Common myeloid progenitor, CD34-positive (primary cell): ENCODE measurements at regions of chr5 and their contacts with region 1.

Region 1: GRCh38 chr5:150409638-150410523 is 2.8 kb downstream of the CD74 start:
- DNase-seq: peak; percentile 74 to 78 (median 74)
- H3K4me3 ChIP-seq: peak overlapping the region; percentile 30 to 100 (median 94)
- H3K27ac ChIP-seq: peak overlapping the region; percentile 97
- H3K4me1 ChIP-seq: peaks cover 12 to 61% (median 37%) of the 10 kb centered on the region in 4 experiments
- H3K27me3 ChIP-seq: no peaks in the 10 kb centered on the region

Region 2: DNA sequence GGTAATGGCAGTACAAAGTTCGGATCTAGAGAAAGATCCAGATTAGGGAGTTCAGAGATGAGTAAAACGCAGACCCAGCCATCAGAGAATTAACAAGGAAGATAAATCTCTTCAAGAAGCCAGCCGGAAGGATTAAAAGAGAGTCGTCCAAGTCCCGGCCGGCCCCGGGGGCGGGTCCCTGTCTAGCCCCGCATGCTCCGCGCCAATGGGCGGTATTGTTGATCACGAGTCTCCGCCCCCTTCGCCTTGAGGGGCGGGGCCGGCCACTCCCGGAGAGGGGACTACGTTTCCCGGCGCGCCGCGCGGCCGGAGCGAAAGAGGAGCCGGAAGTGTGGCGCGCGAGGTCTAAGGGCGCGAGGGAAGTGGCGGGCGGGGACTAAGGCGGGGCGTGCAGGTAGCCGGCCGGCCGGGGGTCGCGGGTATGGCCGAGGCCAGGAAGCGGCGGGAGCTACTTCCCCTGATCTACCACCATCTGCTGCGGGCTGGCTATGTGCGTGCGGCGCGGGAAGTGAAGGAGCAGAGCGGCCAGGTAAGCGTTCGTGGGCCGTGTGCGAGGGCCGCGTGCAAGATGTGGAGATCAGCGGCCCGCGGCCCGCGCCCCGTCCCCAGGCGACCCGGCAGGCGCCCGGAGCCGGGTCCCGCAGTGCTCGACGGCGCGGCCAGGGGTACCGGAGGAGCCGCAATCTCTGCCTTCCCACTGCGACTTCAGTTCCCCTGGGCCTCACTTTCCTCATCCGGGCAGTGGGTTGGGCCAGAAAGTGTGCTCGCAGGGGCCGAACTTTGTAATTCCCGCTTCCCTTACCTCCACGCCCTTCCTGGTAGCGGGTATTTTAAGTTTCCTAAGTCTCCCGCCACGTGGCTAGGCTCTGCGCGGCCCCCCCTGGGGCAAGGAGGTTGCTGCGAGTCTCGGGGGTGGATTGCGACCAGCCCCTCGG is 52.3 kb before region 1 on chr5 and contains the start of gene TCOF1:
- CTCF ChIA-PET with region 1: no interaction called
- POLR2A ChIA-PET with region 1: no interaction called
- DNase-seq: peak; percentile 93 to 97 (median 96)
- H3K4me3 ChIP-seq: peak within 1 kb of the TSS; percentile 59 to 88 (median 82)
- H3K27ac ChIP-seq: peak within 1 kb of the TSS in 1 of 2 experiments; percentile 74
- H3K4me1 ChIP-seq: peaks cover 2 to 20% (median 15%) of the 10 kb centered on the region in 4 experiments
- H3K27me3 ChIP-seq: no peaks in the 10 kb centered on the region

Region 3: DNA sequence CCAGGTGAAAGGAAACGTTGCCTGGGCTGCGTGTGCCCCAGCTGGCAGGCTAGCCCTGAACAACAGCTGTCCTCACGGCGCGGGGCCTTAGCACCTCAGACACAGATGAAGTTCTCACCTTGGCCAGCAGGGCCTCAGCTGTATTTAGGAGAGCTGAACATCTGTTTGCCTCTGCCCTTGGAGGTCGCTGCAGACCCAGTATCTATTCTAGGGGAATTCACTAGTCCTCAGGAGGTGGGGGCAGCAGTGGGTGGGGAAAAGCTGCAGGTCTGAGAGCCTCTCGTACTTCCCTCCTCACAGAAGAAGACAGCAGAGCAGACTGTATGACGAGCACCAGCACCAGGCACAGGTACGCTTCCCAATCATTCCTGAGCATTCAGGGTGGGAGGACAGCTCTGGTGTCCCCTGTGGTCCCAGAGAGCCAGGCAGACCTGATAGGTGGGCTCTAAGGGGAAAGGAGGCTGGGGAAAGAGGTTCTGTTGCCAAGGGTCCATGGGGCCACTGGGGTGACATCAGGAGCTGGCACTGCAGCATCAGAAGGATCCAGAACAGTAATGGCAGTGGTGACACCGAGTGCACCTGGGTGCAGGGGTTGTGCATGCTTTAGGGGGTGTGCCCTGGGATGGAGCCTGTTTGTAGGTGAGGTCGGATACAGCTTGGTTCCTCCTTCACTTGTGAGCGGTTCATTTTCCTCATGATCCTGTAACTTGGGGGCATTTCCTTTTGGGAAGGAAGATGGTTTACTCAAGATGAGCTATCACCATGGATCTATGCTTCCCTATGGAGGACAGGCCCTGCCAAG is 11.0 kb before region 1 on chr5:
- CTCF ChIA-PET with region 1: interaction called, 62 read pairs
- POLR2A ChIA-PET with region 1: interaction called, 21 read pairs
- DNase-seq: peak; percentile 60 to 91 (median 88)
- H3K4me3 ChIP-seq: no peak overlapping the region
- H3K27ac ChIP-seq: no peak overlapping the region
- H3K4me1 ChIP-seq: peaks cover 0 to 15% (median 8%) of the 10 kb centered on the region in 4 experiments
- H3K27me3 ChIP-seq: no peaks in the 10 kb centered on the region

Region 4: DNA sequence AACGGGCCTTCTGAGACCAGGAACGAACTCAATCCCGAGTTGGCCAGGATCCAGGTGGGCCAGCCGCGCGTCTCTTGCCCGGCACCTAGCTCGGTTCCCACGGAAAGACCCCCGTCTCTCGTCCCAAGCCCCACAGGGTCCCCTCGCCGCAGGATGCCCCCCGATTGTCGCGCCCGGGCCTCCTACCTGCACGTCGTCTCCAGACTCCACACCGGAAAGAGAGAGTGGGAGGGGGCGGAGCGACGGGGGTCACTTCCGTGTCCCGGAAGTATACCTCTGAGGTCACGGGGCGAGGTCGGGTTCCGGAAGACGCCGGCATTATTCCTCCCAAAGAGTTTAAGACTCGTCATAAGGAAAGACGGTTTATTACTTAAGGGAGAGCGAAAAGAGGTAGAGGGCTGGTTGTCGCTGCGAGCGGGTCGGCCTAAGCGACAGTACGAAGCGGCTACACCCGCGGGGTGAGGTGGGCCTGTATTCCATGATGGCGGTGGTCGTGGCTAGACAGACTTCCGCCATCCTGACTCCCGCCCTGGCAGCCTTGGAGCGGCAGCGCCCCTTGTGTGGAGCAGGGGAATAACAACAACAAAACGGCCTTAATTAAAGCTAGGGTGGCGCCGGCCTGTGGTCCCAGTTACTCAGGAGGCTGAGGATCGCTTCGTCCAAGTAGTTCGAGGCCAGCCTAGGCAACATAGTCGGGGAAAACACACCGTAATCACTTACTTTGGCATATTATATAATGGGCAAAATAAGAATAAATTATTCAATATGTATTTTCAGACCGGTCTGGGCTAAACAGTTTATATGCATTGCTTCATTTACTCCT is 39.8 kb after region 1 on chr5 and contains the start of gene RPS14:
- CTCF ChIA-PET with region 1: interaction called, 10 read pairs
- POLR2A ChIA-PET with region 1: interaction called, 12 read pairs
- DNase-seq: peak; percentile 96 to 98 (median 98)
- H3K4me3 ChIP-seq: peak within 1 kb of the TSS; percentile 85 to 98 (median 95)
- H3K27ac ChIP-seq: peak within 1 kb of the TSS; percentile 99 to 100
- H3K4me1 ChIP-seq: peaks cover 6 to 47% (median 44%) of the 10 kb centered on the region in 4 experiments
- H3K27me3 ChIP-seq: no peaks in the 10 kb centered on the region